MCF 10A (cell line): ENCODE measurements at regions of chr10 and their contacts with region 1.

Region 1: GRCh38 chr10:103416436-103417147 is 20.2 kb downstream of the PDCD11 start:
- DNase-seq: peak; percentile 68
- H3K4me3 Mint-ChIP-seq: no peak overlapping the region
- H3K27ac Mint-ChIP-seq: no peak overlapping the region
- H3K4me1 Mint-ChIP-seq: no peaks in the 10 kb centered on the region
- H3K27me3 Mint-ChIP-seq: no peaks in the 10 kb centered on the region
- CTCF ChIP-seq: peak; percentile 37

Region 2: DNA sequence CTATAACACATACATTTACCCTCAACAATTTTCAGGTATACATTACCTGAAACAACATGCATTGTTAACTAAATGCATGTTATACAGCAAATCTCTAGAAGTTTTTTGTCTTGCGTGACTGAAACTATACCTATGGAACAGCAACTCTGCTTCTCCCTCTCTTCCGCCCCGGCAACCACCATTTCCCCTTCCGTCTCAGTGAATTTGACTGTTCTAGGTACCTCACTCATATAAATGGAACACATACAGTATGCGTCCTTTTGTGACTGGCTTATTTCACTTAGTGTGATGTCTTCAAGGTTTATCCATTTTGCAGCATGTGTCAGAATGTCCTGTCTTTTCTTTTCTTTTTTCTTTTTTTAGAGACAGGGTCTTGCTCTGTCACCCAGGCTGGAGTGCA is 13.1 kb after region 1 on chr10:
- CTCF ChIA-PET with region 1: interaction called, 18 read pairs
- POLR2A ChIA-PET with region 1: no interaction called
- intact Hi-C with region 1: no loop called
- DNase-seq: no peak
- H3K4me3 Mint-ChIP-seq: no peak overlapping the region
- H3K27ac Mint-ChIP-seq: no peak overlapping the region
- H3K4me1 Mint-ChIP-seq: no peaks in the 10 kb centered on the region
- H3K27me3 Mint-ChIP-seq: no peaks in the 10 kb centered on the region
- CTCF ChIP-seq: no peak

Region 3: DNA sequence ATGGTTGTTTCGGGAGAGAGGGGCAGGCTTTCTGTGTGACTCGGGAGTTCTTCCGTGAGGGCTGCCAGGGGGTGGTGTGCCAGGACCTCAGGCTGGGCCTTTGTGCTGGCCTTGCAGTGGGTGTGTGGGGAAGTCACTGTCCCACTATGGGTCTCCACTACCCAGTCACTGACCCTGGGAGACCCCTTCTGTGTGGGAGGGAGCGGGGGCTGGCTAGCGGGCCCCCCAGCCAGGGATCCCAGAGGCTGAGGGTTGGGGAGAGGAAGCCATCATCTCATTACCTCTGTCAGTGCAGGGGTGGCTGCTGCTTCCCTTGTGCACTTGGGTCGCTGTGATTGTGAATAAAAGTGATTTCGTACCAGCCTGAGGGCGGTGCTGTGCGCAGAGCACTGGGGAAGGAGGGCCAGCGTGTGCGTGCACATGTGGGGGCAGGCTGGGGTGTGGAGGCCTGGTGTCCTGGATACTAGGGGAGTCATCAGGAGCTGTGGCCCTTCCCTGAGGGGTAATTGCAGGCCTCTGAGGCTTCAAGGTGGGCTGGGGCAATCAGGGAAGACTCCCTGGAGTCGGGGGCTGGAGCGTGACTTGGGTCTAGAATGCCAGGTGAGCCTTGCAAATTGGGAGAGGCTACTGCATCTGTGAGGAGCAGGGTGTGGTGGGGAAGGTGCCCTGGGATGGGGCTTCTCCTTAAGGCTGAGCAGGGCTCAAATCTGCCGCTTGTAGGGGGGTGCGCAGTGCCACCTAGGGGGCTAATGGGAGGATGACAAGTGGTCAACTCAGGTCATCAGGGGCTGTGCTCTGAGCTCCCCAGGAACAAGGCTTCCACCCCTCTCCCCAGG is 175.8 kb after region 1 on chr10:
- CTCF ChIA-PET with region 1: no interaction called
- POLR2A ChIA-PET with region 1: no interaction called
- intact Hi-C with region 1: loop called (anchors 2 kb)
- DNase-seq: peak; percentile 51
- H3K4me3 Mint-ChIP-seq: no peak overlapping the region
- H3K27ac Mint-ChIP-seq: no peak overlapping the region
- H3K4me1 Mint-ChIP-seq: no peaks in the 10 kb centered on the region
- H3K27me3 Mint-ChIP-seq: no peaks in the 10 kb centered on the region
- CTCF ChIP-seq: peak; percentile 50

Region 4: GRCh38 chr10:103942866-103943265 is 526.3 kb after region 1 on chr10:
- CTCF ChIA-PET with region 1: no interaction called
- POLR2A ChIA-PET with region 1: no interaction called
- intact Hi-C with region 1: no loop called
- DNase-seq: no peak
- H3K4me3 Mint-ChIP-seq: no peak overlapping the region
- H3K27ac Mint-ChIP-seq: peak overlapping the region; percentile 37
- H3K4me1 Mint-ChIP-seq: peaks cover 11% of the 10 kb centered on the region
- H3K27me3 Mint-ChIP-seq: no peaks in the 10 kb centered on the region
- CTCF ChIP-seq: no peak